Naive thymus-derived CD4-positive, alpha-beta T cell (primary cell): ENCODE measurements at regions of chr4 and their contacts with region 1.

Region 1: DNA sequence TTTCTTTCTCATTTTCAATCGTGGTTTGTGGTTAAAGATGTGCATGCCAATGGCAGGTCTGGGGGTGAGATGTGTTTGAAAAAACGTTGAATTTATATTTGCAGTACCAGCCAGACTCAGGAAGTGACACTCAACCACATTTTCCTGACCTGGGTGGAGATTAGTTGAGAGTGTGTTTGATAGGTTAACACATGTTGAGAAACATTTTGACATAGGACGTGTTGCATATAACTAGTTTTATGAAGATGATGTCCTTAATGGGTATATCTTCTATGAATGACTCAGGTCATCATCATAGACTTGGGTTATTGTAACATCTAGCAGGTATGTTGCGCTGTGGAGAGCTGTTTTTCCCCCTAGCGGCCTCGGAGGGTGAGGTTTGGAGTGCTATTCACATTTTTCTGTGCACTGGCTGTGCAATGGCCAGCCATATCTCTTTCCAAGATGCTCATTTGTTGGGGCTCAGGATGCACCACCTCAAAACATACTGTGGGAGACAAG is 21.7 kb upstream of the CD38 start:
- DNase-seq: peak; percentile 33 to 83 (median 78)
- ATAC-seq: peak; percentile 89
- H3K4me3 ChIP-seq: peak overlapping the region; percentile 41
- H3K4me3 Mint-ChIP-seq: peak overlapping the region; percentile 64 to 92 (median 76)
- H3K27ac ChIP-seq: peak overlapping the region; percentile 39
- H3K27ac Mint-ChIP-seq: peak overlapping the region; percentile 81 to 98 (median 93)
- H3K4me1 ChIP-seq: peaks cover 35 to 36% of the 10 kb centered on the region in 2 donors
- H3K4me1 Mint-ChIP-seq: peaks cover 43 to 69% (median 62%) of the 10 kb centered on the region in 7 donors
- H3K27me3 ChIP-seq: no peaks in the 10 kb centered on the region
- H3K27me3 Mint-ChIP-seq: no peaks in the 10 kb centered on the region

Region 2: GRCh38 chr4:15479089-15479912 is 277.1 kb before region 1 on chr4:
- CTCF ChIA-PET with region 1: no interaction called
- POLR2A ChIA-PET with region 1: no interaction called
- intact Hi-C with region 1: no loop called
- DNase-seq: peak in 1 of 9 donors; percentile 4
- ATAC-seq: no peak
- H3K4me3 ChIP-seq: no peak overlapping the region
- H3K4me3 Mint-ChIP-seq: no peak overlapping the region
- H3K27ac ChIP-seq: no peak overlapping the region
- H3K27ac Mint-ChIP-seq: no peak overlapping the region
- H3K4me1 ChIP-seq: no peaks in the 10 kb centered on the region
- H3K4me1 Mint-ChIP-seq: no peaks in the 10 kb centered on the region
- H3K27me3 ChIP-seq: no peaks in the 10 kb centered on the region
- H3K27me3 Mint-ChIP-seq: peaks cover 0 to 6% (median 0%) of the 10 kb centered on the region in 5 donors

Region 3: GRCh38 chr4:15655229-15656037 is 101.0 kb before region 1 on chr4 and contains the start of gene FBXL5:
- CTCF ChIA-PET with region 1: interaction called, 3 read pairs
- POLR2A ChIA-PET with region 1: no interaction called
- intact Hi-C with region 1: loop called in 1 of 2 experiments (anchors 1 kb)
- DNase-seq: peak; percentile 77 to 92 (median 87)
- ATAC-seq: peak; percentile 92
- H3K4me3 ChIP-seq: peak within 1 kb of the TSS; percentile 87
- H3K4me3 Mint-ChIP-seq: peak within 1 kb of the TSS; percentile 94 to 100 (median 97)
- H3K27ac ChIP-seq: peak within 1 kb of the TSS; percentile 90
- H3K27ac Mint-ChIP-seq: peak within 1 kb of the TSS; percentile 90 to 98 (median 98)
- H3K4me1 ChIP-seq: peaks cover 29% of the 10 kb centered on the region in 2 donors
- H3K4me1 Mint-ChIP-seq: peaks cover 21 to 49% (median 45%) of the 10 kb centered on the region in 7 donors
- H3K27me3 ChIP-seq: no peaks in the 10 kb centered on the region
- H3K27me3 Mint-ChIP-seq: peaks cover 0 to 2% (median 0%) of the 10 kb centered on the region in 5 donors
- total RNA-seq, gene FBXL5: 39.1 to 107 (median 57.4) TPM

Region 4: DNA sequence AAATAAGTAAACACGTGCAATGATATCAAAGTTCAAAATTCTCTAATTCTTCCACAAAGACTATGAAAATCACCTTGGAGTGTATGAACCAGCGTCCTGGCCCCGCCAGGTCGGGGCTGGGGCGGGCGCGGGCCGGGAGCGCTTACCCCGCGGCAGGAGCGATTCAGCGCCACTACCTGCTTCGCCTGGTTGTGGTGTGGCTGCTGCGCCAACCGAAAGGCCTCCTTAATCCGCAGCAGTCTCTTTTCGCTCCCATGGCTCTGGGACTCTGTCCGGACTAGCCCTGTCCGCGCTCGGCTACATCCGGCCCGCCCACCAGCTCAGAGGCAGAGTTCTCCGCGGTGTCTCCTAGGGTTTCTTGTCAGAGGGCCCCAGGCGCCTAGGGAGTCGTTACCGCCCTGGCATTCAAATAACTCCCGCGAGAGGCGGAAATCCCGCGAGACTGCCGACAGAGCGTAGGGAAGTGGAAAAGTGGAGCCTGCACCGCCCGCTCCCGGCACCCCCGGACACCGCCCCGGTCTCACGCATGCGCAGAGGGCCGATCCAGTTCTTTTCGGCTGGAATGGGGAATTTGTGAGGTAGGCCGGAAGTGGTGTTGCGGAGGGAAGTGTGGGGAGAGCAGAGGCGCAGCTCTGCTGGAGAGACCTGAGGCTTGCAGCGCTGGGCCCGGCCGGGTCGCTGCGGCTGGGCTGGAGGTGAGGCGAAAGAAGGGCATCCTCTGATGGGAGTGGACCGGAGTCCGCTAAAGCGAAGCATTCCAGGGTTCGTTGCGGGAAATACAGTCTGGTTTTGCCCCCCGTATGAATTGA is 75.0 kb before region 1 on chr4 and contains the start of gene FAM200B:
- CTCF ChIA-PET with region 1: interaction called, 3 read pairs
- POLR2A ChIA-PET with region 1: interaction called, 3 read pairs
- intact Hi-C with region 1: loop called (anchors 1 to 2 kb)
- DNase-seq: peak; percentile 87 to 100 (median 93)
- ATAC-seq: peak; percentile 98
- H3K4me3 ChIP-seq: peak within 1 kb of the TSS; percentile 78
- H3K4me3 Mint-ChIP-seq: peak within 1 kb of the TSS; percentile 88 to 99 (median 94)
- H3K27ac ChIP-seq: peak within 1 kb of the TSS; percentile 94
- H3K27ac Mint-ChIP-seq: peak within 1 kb of the TSS; percentile 89 to 100 (median 98)
- H3K4me1 ChIP-seq: peaks cover 5 to 11% of the 10 kb centered on the region in 2 donors
- H3K4me1 Mint-ChIP-seq: peaks cover 22 to 54% (median 42%) of the 10 kb centered on the region in 7 donors
- H3K27me3 ChIP-seq: no peaks in the 10 kb centered on the region
- H3K27me3 Mint-ChIP-seq: no peaks in the 10 kb centered on the region
- total RNA-seq, gene FAM200B: 10.6 to 42.8 (median 27.4) TPM

Region 5: DNA sequence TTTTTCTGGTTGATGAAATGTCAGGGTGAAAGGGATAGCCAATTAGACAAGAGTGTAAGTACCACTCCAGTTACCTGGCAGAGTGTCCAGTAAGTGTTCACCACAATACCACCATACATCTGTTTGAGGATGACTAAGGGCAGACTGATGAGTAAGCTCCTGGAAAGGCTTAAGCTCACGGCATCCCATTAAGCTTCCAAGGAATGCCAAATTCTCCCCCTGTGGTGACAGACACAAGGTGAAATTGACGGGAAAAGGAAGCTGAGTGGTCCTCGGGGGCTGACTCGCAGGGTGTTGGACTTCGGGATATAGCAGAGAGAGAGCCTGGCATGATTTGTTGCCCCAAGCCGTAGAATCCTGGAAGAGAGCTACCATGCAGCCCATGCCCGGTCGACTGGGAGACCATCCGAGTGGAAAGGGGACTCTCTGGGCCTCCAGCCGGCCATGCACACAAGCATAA is 61.1 kb before region 1 on chr4:
- CTCF ChIA-PET with region 1: no interaction called
- POLR2A ChIA-PET with region 1: no interaction called
- intact Hi-C with region 1: no loop called
- DNase-seq: no peak
- ATAC-seq: no peak
- H3K4me3 ChIP-seq: no peak overlapping the region
- H3K4me3 Mint-ChIP-seq: no peak overlapping the region
- H3K27ac ChIP-seq: no peak overlapping the region
- H3K27ac Mint-ChIP-seq: no peak overlapping the region
- H3K4me1 ChIP-seq: no peaks in the 10 kb centered on the region
- H3K4me1 Mint-ChIP-seq: peaks cover 0 to 7% (median 6%) of the 10 kb centered on the region in 7 donors
- H3K27me3 ChIP-seq: no peaks in the 10 kb centered on the region
- H3K27me3 Mint-ChIP-seq: peaks cover 9 to 21% (median 13%) of the 10 kb centered on the region in 5 donors

Region 6: GRCh38 chr4:15737255-15737654 is 19.2 kb before region 1 on chr4:
- CTCF ChIA-PET with region 1: interaction called, 6 read pairs
- POLR2A ChIA-PET with region 1: no interaction called
- intact Hi-C with region 1: loop called in 1 of 2 experiments (anchors 1 kb)
- DNase-seq: no peak
- ATAC-seq: no peak
- H3K4me3 ChIP-seq: no peak overlapping the region
- H3K4me3 Mint-ChIP-seq: peak overlapping the region in 1 of 10 donors; percentile 10
- H3K27ac ChIP-seq: no peak overlapping the region
- H3K27ac Mint-ChIP-seq: peak overlapping the region in 1 of 9 donors; percentile 4
- H3K4me1 ChIP-seq: peaks cover 0 to 7% of the 10 kb centered on the region in 2 donors
- H3K4me1 Mint-ChIP-seq: peaks cover 5 to 39% (median 33%) of the 10 kb centered on the region in 7 donors
- H3K27me3 ChIP-seq: no peaks in the 10 kb centered on the region
- H3K27me3 Mint-ChIP-seq: no peaks in the 10 kb centered on the region

Region 7: DNA sequence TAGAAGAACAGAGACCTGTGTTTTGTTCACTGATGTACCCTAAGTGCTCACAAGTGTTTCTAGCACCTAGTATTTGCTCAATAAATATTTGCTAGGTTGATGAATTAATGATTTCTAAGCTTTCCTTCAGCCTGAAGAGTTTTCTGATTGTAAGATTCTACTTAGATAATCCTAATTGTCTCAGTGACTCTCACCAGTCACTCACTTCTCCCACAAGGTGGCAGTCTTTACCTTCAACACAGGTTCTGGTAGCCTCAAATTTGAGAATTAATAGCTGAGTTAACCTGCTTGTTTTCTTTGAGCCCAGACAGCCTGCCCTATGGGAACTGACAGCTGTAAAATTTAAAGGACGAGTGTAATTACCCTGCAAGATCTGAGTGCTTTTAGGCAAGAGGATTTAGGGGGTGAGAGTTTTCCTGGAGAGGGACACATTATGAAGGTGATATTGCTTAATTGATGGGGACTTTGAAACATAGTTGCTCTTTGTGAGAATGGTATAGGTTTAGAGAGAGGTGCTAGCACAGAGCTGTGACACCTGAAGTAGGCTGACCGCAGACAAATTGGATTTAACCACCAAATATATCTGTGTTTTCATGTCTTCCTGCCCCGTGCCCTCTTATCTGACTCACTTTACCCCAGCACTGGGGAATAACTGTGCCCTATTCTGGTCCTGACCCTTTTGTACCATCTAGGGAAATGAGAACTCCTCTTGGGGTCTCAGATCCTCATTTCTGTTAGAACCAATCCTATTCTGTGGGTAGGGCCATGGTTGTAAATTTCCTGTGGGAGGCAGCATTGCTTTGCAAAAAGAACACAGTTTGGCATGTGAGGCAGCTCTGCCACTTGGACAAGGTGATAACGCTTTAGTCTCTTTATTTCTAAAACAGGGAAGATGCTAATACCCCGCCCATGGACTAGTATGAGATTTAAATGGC is 49.4 kb after region 1 on chr4:
- CTCF ChIA-PET with region 1: interaction called, 32 read pairs
- POLR2A ChIA-PET with region 1: interaction called, 3 read pairs
- intact Hi-C with region 1: loop called in 1 of 2 experiments (anchors 1 kb)
- DNase-seq: peak in 7 of 9 donors; percentile 37 to 64 (median 52)
- ATAC-seq: peak; percentile 80
- H3K4me3 ChIP-seq: no peak overlapping the region
- H3K4me3 Mint-ChIP-seq: no peak overlapping the region
- H3K27ac ChIP-seq: no peak overlapping the region
- H3K27ac Mint-ChIP-seq: peak overlapping the region in 3 of 9 donors; percentile 21 to 78 (median 60)
- H3K4me1 ChIP-seq: peaks cover 0 to 4% of the 10 kb centered on the region in 2 donors
- H3K4me1 Mint-ChIP-seq: peaks cover 26 to 76% (median 43%) of the 10 kb centered on the region in 7 donors
- H3K27me3 ChIP-seq: no peaks in the 10 kb centered on the region
- H3K27me3 Mint-ChIP-seq: no peaks in the 10 kb centered on the region

Region 8: GRCh38 chr4:15990570-15991285 is 234.3 kb after region 1 on chr4:
- CTCF ChIA-PET with region 1: no interaction called
- POLR2A ChIA-PET with region 1: no interaction called
- intact Hi-C with region 1: no loop called
- DNase-seq: no peak
- ATAC-seq: no peak
- H3K4me3 ChIP-seq: no peak overlapping the region
- H3K4me3 Mint-ChIP-seq: no peak overlapping the region
- H3K27ac ChIP-seq: no peak overlapping the region
- H3K27ac Mint-ChIP-seq: no peak overlapping the region
- H3K4me1 ChIP-seq: no peaks in the 10 kb centered on the region
- H3K4me1 Mint-ChIP-seq: peaks cover 0 to 11% (median 0%) of the 10 kb centered on the region in 7 donors
- H3K27me3 ChIP-seq: no peaks in the 10 kb centered on the region
- H3K27me3 Mint-ChIP-seq: peaks cover 0 to 34% (median 8%) of the 10 kb centered on the region in 5 donors

Region 9: GRCh38 chr4:16056681-16057385 is 300.4 kb after region 1 on chr4:
- CTCF ChIA-PET with region 1: no interaction called
- POLR2A ChIA-PET with region 1: no interaction called
- intact Hi-C with region 1: no loop called
- DNase-seq: no peak
- ATAC-seq: no peak
- H3K4me3 ChIP-seq: no peak overlapping the region
- H3K4me3 Mint-ChIP-seq: no peak overlapping the region
- H3K27ac ChIP-seq: no peak overlapping the region
- H3K27ac Mint-ChIP-seq: no peak overlapping the region
- H3K4me1 ChIP-seq: no peaks in the 10 kb centered on the region
- H3K4me1 Mint-ChIP-seq: peaks cover 0 to 12% (median 0%) of the 10 kb centered on the region in 7 donors
- H3K27me3 ChIP-seq: no peaks in the 10 kb centered on the region
- H3K27me3 Mint-ChIP-seq: peaks cover 32 to 54% (median 37%) of the 10 kb centered on the region in 5 donors